SK-N-SH (cell line): ENCODE measurements at regions of chr19 and their contacts with region 1.

Region 1: GRCh38 chr19:10717356-10718204 is at the start of gene DNM2:
- DNase-seq: peak; percentile 96
- H3K4me3 ChIP-seq: peak within 1 kb of the TSS; percentile 74 to 98
- H3K27ac ChIP-seq: peak within 1 kb of the TSS; percentile 80 to 93
- H3K4me1 ChIP-seq: peaks cover 4 to 13% of the 10 kb centered on the region in 2 experiments; a peak in 1 of 4 replicates
- H3K27me3 ChIP-seq: no peaks in the 10 kb centered on the region
- CTCF ChIP-seq: peak; percentile 86
- EP300 ChIP-seq: no peak
- RAD21 ChIP-seq: peak; percentile 90
- polyA plus RNA-seq, gene DNM2: 52.5 and 53.6 TPM in 2 replicates

Region 2: GRCh38 chr19:10695401-10696398 is 21.9 kb before region 1 on chr19:
- CTCF ChIA-PET with region 1: interaction called, 47 read pairs
- POLR2A ChIA-PET with region 1: interaction called, 7 read pairs
- DNase-seq: peak; percentile 95
- H3K4me3 ChIP-seq: peak overlapping the region; percentile 22 to 63
- H3K27ac ChIP-seq: no peak overlapping the region
- H3K4me1 ChIP-seq: peaks cover 0 to 10% of the 10 kb centered on the region in 2 experiments; a peak in 1 of 4 replicates
- H3K27me3 ChIP-seq: no peaks in the 10 kb centered on the region
- CTCF ChIP-seq: no peak
- EP300 ChIP-seq: no peak
- RAD21 ChIP-seq: no peak

Region 3: DNA sequence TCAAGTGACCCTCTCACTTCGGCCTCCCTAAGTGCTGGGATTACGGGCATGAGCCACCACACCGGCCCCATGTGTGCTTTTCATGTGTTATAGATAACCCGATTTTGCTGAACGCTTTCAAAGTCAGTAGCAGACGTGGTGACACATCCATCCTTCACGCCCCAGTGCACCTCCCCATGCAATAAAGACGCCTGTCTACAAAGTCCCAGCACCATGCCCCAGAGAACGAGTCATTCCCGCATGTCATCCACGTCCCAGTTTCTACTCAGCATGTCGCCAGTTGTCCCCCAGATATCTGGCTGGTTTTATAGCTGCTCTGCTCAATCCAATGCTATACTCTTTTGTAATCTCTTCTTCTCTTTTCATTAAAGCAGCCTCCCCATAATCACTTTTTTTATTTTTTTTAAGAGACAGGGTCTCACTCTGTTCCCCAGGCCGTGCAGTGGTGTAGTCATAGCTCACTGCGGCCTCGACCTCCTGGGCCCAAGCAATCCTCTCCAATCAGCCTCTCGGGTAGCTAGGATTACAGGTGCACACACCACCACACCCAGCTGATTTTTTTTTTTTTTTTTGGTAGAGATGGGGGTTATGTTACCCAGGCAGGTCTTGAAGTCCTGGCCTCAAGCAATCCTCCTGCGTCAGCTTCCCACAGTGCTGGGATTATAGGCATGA is 42.8 kb after region 1 on chr19:
- CTCF ChIA-PET with region 1: interaction called, 28 read pairs
- POLR2A ChIA-PET with region 1: no interaction called
- DNase-seq: no peak
- H3K4me3 ChIP-seq: no peak overlapping the region
- H3K27ac ChIP-seq: no peak overlapping the region
- H3K4me1 ChIP-seq: peaks cover 0 to 20% of the 10 kb centered on the region in 2 experiments; a peak in 1 of 4 replicates
- H3K27me3 ChIP-seq: no peaks in the 10 kb centered on the region
- CTCF ChIP-seq: no peak
- EP300 ChIP-seq: no peak
- RAD21 ChIP-seq: no peak

Region 4: DNA sequence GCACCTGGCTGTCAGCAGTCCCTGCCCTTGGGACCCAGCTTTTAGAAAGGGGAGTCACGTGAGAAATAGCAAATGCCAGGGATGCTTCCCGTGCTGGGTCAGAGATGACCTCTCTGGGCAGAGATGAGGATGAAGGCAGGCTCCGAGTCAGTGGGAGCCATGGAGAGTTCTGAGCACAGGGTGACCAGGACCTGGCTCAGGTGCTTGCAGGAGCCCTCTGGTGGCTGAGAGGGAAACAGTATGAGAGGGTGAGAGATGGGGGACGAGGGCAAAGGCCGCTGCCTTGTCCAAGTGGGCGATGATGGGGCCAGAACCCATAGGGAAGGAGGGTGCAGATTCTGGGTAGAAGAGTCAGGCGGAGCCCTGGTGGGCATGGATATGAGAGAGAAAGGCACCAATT is 102.6 kb after region 1 on chr19:
- CTCF ChIA-PET with region 1: interaction called, 24 read pairs
- POLR2A ChIA-PET with region 1: interaction called, 3 read pairs
- DNase-seq: peak; percentile 58
- H3K4me3 ChIP-seq: no peak overlapping the region
- H3K27ac ChIP-seq: peak overlapping the region in 1 of 2 experiments; percentile 58; a peak in 2 of 4 replicates
- H3K4me1 ChIP-seq: peaks cover 28 to 53% of the 10 kb centered on the region in 2 experiments; a peak in 3 of 4 replicates
- H3K27me3 ChIP-seq: no peaks in the 10 kb centered on the region
- CTCF ChIP-seq: peak; percentile 42
- EP300 ChIP-seq: no peak
- RAD21 ChIP-seq: peak; percentile 35; the same call in 1 of the 2 replicates

Region 5: DNA sequence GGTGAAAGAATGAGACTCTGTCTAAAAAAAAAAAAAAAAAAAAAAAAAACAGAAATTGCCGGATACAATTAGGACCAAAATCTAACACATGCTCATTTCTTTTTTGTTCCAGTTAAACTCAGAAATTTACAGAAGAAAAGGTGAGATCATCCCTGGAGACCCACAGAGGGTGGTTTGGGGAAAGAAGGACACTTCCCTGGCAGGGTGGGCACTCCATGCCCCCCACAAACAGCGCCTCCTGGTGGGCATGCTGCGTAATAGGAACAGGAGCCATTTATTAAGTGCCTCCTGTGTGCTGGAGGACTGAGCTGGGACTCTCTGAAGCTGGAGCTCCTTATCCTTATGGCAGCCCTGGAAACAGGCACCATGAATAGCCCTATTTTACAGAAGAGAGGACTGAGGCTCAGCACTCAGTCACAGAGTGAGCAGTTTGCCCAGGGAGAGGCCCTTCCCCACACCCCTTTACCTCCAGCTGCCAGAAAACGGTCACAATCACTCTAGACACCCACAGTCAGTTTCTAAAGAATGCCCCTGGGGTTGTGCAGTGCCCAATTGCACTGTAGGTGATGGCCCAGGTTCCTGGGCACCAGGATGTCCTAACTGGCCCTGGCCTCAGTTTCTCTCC is 140.7 kb after region 1 on chr19:
- CTCF ChIA-PET with region 1: interaction called, 74 read pairs
- POLR2A ChIA-PET with region 1: no interaction called
- DNase-seq: peak; percentile 69
- H3K4me3 ChIP-seq: peak overlapping the region in 1 of 2 experiments; percentile 52; a peak in 1 of 4 replicates
- H3K27ac ChIP-seq: no peak overlapping the region
- H3K4me1 ChIP-seq: no peaks in the 10 kb centered on the region
- H3K27me3 ChIP-seq: no peaks in the 10 kb centered on the region
- CTCF ChIP-seq: peak; percentile 95
- EP300 ChIP-seq: no peak
- RAD21 ChIP-seq: peak; percentile 47